ENCODE measurements at regions of chr10 and their contacts with region 1.

Region 1: GRCh38 chr10:74651565-74651964 is 174.8 kb upstream of the KAT6B start:
- DNase-seq: no peak
- ATAC-seq: peak; percentile 63
- H3K4me3 Mint-ChIP-seq: no peak overlapping the region
- H3K27ac Mint-ChIP-seq: no peak overlapping the region
- H3K4me1 Mint-ChIP-seq: peaks cover 7% of the 10 kb centered on the region
- H3K27me3 Mint-ChIP-seq: no peaks in the 10 kb centered on the region

Region 2: DNA sequence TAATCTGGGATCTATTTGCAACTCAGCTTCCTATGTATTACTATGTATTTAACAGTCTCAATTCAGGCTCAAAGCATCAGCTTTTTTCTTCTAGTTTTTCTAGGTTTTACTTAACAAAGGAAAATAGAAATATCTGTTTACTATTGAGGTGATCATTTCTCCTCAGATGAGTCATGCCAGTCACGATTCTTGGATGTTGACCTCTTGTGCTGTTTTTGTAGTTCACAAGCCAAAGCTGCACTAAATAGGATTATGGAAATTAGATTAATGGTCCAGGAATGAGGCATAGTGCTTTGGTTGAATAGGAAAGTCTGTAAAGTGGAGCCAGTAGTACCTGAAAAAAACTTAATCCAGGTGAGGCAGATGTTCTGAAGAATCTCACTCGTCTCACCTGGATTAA is 23.4 kb before region 1 on chr10:
- CTCF ChIA-PET with region 1: no interaction called
- POLR2A ChIA-PET with region 1: interaction called, 10 read pairs
- intact Hi-C with region 1: no loop called
- DNase-seq: no peak
- ATAC-seq: no peak
- H3K4me3 Mint-ChIP-seq: no peak overlapping the region
- H3K27ac Mint-ChIP-seq: no peak overlapping the region
- H3K4me1 Mint-ChIP-seq: no peaks in the 10 kb centered on the region
- H3K27me3 Mint-ChIP-seq: no peaks in the 10 kb centered on the region

Region 3: GRCh38 chr10:75143353-75143752 is 491.8 kb after region 1 on chr10:
- CTCF ChIA-PET with region 1: no interaction called
- POLR2A ChIA-PET with region 1: no interaction called
- intact Hi-C with region 1: no loop called
- DNase-seq: no peak
- ATAC-seq: no peak
- H3K4me3 Mint-ChIP-seq: no peak overlapping the region
- H3K27ac Mint-ChIP-seq: peak overlapping the region; percentile 60
- H3K4me1 Mint-ChIP-seq: peaks cover 37% of the 10 kb centered on the region
- H3K27me3 Mint-ChIP-seq: no peaks in the 10 kb centered on the region

Measured in activated CD4-positive, alpha-beta T cell treated with anti-CD3 and anti-CD28 coated beads for 36 hours (primary cell).